HCT116 (cell line): ENCODE measurements at regions of chr3 and their contacts with region 1.

Region 1: DNA sequence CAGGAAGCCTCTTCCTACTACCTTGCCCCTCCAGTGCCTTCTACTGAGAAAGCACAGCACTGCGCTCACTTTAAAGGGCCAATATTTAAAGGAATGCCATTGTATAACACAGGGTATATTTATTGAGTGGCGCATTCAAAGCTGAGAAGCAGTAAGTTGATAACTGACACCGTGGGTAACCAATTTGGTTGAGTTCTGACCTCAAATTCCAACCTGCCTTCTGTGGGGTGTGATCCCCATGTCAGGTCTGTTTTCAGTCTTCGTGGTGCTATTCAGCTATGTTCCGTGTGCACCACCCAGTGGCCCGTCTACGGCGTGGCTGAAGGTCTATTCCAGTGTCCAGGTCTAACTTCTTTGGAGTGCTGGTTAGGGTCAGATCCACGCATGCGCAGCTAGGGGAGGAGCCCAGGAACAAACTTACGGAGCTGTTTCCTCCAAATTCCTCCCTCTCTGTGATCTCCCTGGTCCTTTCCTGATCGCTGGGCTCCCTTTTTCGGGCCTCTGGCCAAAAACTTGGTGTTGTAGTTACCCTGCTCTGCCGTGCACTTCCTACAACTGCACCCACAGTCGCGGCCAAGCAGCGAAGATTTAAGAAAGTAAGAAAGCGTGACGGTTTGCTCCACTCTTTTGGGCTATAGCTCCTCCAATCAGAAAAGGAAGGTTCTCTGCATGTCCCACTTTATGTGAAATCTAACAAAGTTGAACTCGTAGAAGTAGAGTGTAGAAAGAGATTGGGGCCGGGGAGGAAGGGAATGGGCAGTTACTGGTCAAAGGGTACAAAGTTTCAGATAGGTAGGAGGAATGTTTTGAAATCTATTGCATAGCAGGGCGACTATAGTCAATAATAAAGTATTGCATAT is 7.7 kb downstream of the LRRC2 start:
- DNase-seq: peak; percentile 90
- ATAC-seq: peak; percentile 98
- H3K4me3 ChIP-seq: peak overlapping the region; percentile 46 to 58
- H3K27ac ChIP-seq: peak overlapping the region; percentile 14; the same call in 1 of the 2 replicates
- H3K4me1 ChIP-seq: peaks cover 3 to 26% of the 10 kb centered on the region in 2 experiments; a peak in 3 of 4 replicates
- H3K27me3 ChIP-seq: no peaks in the 10 kb centered on the region
- CTCF ChIP-seq: peak; percentile 74 to 99 (median 75)
- POLR2A ChIP-seq: peak; percentile 54
- RAD21 ChIP-seq: peak; percentile 98

Region 2: GRCh38 chr3:45938864-45939263 is 619.5 kb before region 1 on chr3:
- CTCF ChIA-PET with region 1: no interaction called
- POLR2A ChIA-PET with region 1: no interaction called
- RAD21 ChIA-PET with region 1: no interaction called
- intact Hi-C with region 1: loop called (anchors 5 kb)
- DNase-seq: peak; percentile 69
- ATAC-seq: peak; percentile 92
- H3K4me3 ChIP-seq: no peak overlapping the region
- H3K27ac ChIP-seq: no peak overlapping the region
- H3K4me1 ChIP-seq: peaks cover 0 to 6% of the 10 kb centered on the region in 2 experiments; a peak in 1 of 4 replicates
- H3K27me3 ChIP-seq: no peaks in the 10 kb centered on the region
- CTCF ChIP-seq: peak; percentile 84 to 92 (median 91)
- POLR2A ChIP-seq: no peak
- RAD21 ChIP-seq: peak; percentile 82

Region 3: DNA sequence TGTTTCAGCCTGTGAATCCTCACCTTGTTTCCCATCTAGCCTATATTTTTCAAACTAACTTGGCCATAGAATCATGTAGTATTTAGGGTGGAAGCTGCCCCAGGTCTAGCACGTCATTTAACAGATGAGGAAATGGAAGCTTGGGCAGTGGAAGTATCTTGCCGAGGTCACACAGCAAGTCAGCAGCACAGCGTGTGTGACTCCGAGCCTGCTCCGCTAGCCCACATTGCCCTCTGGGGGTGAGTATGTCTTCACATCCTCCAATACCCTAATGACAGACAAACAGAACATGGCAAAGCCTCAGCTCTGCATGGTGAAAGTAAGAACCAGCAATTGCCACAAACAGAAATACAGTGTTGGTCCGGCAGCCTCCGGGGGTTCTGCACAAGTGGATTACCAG is 189.8 kb before region 1 on chr3:
- CTCF ChIA-PET with region 1: interaction called, 3 read pairs
- POLR2A ChIA-PET with region 1: no interaction called
- RAD21 ChIA-PET with region 1: interaction called in 1 of 2 experiments, 3 read pairs
- intact Hi-C with region 1: loop called (anchors 2 kb)
- DNase-seq: no peak
- ATAC-seq: peak; percentile 82
- H3K4me3 ChIP-seq: no peak overlapping the region
- H3K27ac ChIP-seq: no peak overlapping the region
- H3K4me1 ChIP-seq: no peaks in the 10 kb centered on the region
- H3K27me3 ChIP-seq: peaks cover 33% of the 10 kb centered on the region
- CTCF ChIP-seq: peak; percentile 36 to 40 (median 38); a peak in 4 of 6 replicates
- POLR2A ChIP-seq: no peak
- RAD21 ChIP-seq: peak; percentile 76

Region 4: DNA sequence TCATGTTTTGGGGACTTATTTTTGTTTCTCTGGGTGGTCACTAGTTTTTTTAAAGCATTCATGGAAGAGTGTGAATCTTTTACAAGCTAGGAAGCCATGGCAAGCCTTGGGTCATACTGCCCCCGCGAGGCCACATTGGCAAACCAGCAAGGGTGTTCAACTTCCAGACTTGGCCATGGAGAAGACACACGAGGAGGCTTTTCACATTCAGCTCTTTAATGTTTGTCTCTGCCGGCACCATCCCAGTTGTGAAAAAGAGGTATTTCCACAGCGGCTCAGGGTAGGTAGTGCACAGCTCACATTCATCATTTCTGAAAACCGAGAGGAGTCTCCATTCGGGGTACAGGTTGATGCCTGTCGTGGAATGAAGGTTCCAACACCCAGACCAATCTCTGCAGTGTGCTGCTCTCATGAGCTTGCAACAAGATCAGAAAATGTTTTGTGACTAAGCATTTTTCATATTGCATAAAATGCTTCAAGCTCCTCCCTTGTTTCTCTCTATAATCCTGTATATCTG is 179.9 kb before region 1 on chr3:
- CTCF ChIA-PET with region 1: interaction called, 14 read pairs
- POLR2A ChIA-PET with region 1: no interaction called
- RAD21 ChIA-PET with region 1: interaction called in 1 of 2 experiments, 3 read pairs
- intact Hi-C with region 1: no loop called
- DNase-seq: peak; percentile 48
- ATAC-seq: peak; percentile 97
- H3K4me3 ChIP-seq: no peak overlapping the region
- H3K27ac ChIP-seq: no peak overlapping the region
- H3K4me1 ChIP-seq: peaks cover 0 to 3% of the 10 kb centered on the region in 2 experiments; a peak in 1 of 4 replicates
- H3K27me3 ChIP-seq: peaks cover 27% of the 10 kb centered on the region
- CTCF ChIP-seq: peak; percentile 66 to 92 (median 87)
- POLR2A ChIP-seq: no peak
- RAD21 ChIP-seq: peak; percentile 85

Region 5: DNA sequence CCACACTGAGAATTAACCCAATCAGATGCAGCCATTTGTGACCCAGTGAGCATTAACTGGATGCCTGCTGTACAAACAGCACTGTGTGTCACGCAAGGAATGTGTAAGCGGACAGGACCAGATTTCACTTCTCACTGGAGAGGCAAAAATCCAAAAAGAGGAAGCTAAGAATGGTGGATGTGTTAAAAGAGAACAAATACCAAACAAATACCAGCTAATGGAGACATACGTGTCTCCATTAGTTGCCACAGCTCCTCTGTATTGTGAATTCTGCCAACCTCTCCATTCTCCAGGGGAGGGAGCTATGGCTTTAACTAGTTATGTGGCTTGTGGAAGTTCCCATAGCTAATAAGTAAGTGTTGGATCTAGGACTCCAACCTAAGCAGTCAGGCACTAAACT is 96.3 kb before region 1 on chr3:
- CTCF ChIA-PET with region 1: interaction called, 11 read pairs
- POLR2A ChIA-PET with region 1: no interaction called
- RAD21 ChIA-PET with region 1: interaction called in 1 of 2 experiments, 3 read pairs
- intact Hi-C with region 1: no loop called
- DNase-seq: no peak
- ATAC-seq: peak; percentile 58; the same call in 1 of the 2 replicates
- H3K4me3 ChIP-seq: no peak overlapping the region
- H3K27ac ChIP-seq: no peak overlapping the region
- H3K4me1 ChIP-seq: no peaks in the 10 kb centered on the region; a peak in 1 of 4 replicates
- H3K27me3 ChIP-seq: peaks cover 16% of the 10 kb centered on the region
- CTCF ChIP-seq: peak in 2 of 3 experiments; percentile 10 to 21; a peak in 2 of 6 replicates
- POLR2A ChIP-seq: no peak
- RAD21 ChIP-seq: no peak; the same call in 1 of the 2 replicates

Region 6: GRCh38 chr3:46488735-46489361 is 69.6 kb before region 1 on chr3:
- CTCF ChIA-PET with region 1: interaction called, 144 read pairs
- POLR2A ChIA-PET with region 1: interaction called, 7 read pairs
- RAD21 ChIA-PET with region 1: interaction called, 21 read pairs
- intact Hi-C with region 1: loop called (anchors 1 kb)
- DNase-seq: peak; percentile 85
- ATAC-seq: peak; percentile 98
- H3K4me3 ChIP-seq: no peak overlapping the region
- H3K27ac ChIP-seq: no peak overlapping the region
- H3K4me1 ChIP-seq: peaks cover 0 to 10% of the 10 kb centered on the region in 2 experiments; a peak in 1 of 4 replicates
- H3K27me3 ChIP-seq: no peaks in the 10 kb centered on the region
- CTCF ChIP-seq: peak; percentile 100
- POLR2A ChIP-seq: no peak
- RAD21 ChIP-seq: peak; percentile 100

Region 7: GRCh38 chr3:46496741-46497554 is 61.5 kb before region 1 on chr3:
- CTCF ChIA-PET with region 1: interaction called, 28 read pairs
- POLR2A ChIA-PET with region 1: no interaction called
- RAD21 ChIA-PET with region 1: no interaction called
- intact Hi-C with region 1: loop called (anchors 2 kb)
- DNase-seq: no peak
- ATAC-seq: peak; percentile 81
- H3K4me3 ChIP-seq: no peak overlapping the region
- H3K27ac ChIP-seq: no peak overlapping the region
- H3K4me1 ChIP-seq: no peaks in the 10 kb centered on the region
- H3K27me3 ChIP-seq: no peaks in the 10 kb centered on the region
- CTCF ChIP-seq: peak; percentile 62 to 74 (median 65)
- POLR2A ChIP-seq: no peak
- RAD21 ChIP-seq: peak; percentile 64